H1 (cell line): ENCODE measurements at regions of chr4 and their contacts with region 1.

Region 1: DNA sequence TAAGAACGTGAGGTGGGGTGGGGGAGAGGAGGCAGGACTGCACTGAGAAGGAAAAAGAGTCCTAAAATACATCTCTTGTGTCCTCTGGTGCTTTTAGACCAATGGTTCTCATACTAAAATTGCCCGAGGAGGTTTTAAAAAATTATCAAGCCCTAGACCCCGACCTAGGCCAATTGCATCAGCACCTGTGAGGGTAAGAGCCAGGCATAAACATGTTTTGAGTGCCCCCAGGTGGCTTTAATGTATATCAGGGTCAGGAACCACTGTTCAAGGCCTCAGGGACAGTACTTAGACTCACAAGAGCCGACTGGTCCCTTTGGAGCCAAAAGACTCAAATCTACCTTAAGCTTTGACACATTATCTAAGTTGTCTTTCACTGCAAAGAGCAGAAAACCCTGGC is 37.5 kb upstream of the TMEM150C start:
- DNase-seq: peak in 1 of 2 experiments; percentile 31
- H3K4me3 ChIP-seq: no peak overlapping the region
- H3K27ac ChIP-seq: no peak overlapping the region
- H3K4me1 ChIP-seq: peaks cover 0 to 4% (median 0%) of the 10 kb centered on the region in 4 experiments; a peak in 1 of 7 replicates
- H3K27me3 ChIP-seq: no peaks in the 10 kb centered on the region
- CTCF ChIP-seq: peak; percentile 18 to 79 (median 67)
- EP300 ChIP-seq: no peak
- POLR2A ChIP-seq: no peak
- RAD21 ChIP-seq: peak; percentile 83 to 90

Region 2: GRCh38 chr4:82462415-82462831 is 136.9 kb before region 1 on chr4:
- CTCF ChIA-PET with region 1: interaction called, 39 read pairs
- POLR2A ChIA-PET with region 1: interaction called, 3 read pairs
- DNase-seq: peak; percentile 64 to 95
- H3K4me3 ChIP-seq: no peak overlapping the region
- H3K27ac ChIP-seq: no peak overlapping the region
- H3K4me1 ChIP-seq: no peaks in the 10 kb centered on the region
- H3K27me3 ChIP-seq: no peaks in the 10 kb centered on the region
- CTCF ChIP-seq: peak; percentile 74 to 88 (median 78)
- EP300 ChIP-seq: no peak
- POLR2A ChIP-seq: no peak
- RAD21 ChIP-seq: peak; percentile 81 to 83

Region 3: GRCh38 chr4:82555276-82555675 is 44.1 kb before region 1 on chr4:
- CTCF ChIA-PET with region 1: interaction called, 15 read pairs
- POLR2A ChIA-PET with region 1: no interaction called
- DNase-seq: no peak
- H3K4me3 ChIP-seq: no peak overlapping the region
- H3K27ac ChIP-seq: no peak overlapping the region
- H3K4me1 ChIP-seq: no peaks in the 10 kb centered on the region
- H3K27me3 ChIP-seq: no peaks in the 10 kb centered on the region; a peak in 1 of 7 replicates
- CTCF ChIP-seq: peak; percentile 6 to 60 (median 43)
- EP300 ChIP-seq: no peak
- POLR2A ChIP-seq: no peak
- RAD21 ChIP-seq: peak; percentile 51 to 55

Region 4: GRCh38 chr4:82578935-82579334 is 20.4 kb before region 1 on chr4:
- CTCF ChIA-PET with region 1: interaction called, 10 read pairs
- POLR2A ChIA-PET with region 1: no interaction called
- DNase-seq: no peak
- H3K4me3 ChIP-seq: no peak overlapping the region
- H3K27ac ChIP-seq: no peak overlapping the region
- H3K4me1 ChIP-seq: peaks cover 0 to under 1% (median 0%) of the 10 kb centered on the region in 4 experiments; a peak in 2 of 7 replicates
- H3K27me3 ChIP-seq: no peaks in the 10 kb centered on the region
- CTCF ChIP-seq: peak; percentile 39 to 49 (median 44)
- EP300 ChIP-seq: no peak
- POLR2A ChIP-seq: no peak
- RAD21 ChIP-seq: peak in 1 of 2 experiments; percentile 34; a peak in 2 of 4 replicates

Region 5: DNA sequence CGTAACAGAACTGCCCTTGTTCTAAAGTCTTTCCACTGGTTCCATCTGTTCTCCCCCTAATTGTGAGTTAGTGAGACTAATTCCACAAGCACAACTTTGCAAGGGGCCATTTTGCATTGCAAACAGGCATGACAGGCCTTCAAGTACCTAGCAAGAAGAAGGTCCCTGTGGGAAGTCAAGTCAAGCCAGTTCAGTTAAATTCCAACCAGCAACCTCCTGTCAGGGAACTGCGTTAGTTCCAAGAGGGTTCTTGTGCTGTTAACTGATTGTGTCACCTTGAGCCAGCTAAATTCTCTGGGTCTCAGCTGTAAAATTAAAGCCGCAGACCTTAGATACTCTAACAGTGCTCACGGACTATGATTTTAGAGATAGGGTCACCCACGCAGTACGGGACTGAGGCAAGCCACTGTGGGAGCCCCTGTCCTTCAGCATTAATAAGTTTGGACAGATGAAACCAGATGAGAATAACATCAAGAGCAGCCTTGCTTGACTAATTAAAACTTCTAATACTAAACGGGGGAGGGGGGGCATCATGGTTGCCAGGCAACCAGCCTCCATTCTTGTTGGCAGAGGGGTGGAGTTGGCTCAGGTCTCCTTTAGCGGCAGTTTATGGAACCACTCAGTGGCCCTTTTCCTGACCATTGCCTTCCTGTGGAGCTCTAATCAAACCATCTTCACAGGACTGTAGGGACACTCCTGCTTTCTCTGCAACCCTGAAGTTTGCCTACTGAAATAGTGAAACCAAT is 13.5 kb before region 1 on chr4:
- CTCF ChIA-PET with region 1: interaction called, 20 read pairs
- POLR2A ChIA-PET with region 1: interaction called, 3 read pairs
- DNase-seq: no peak
- H3K4me3 ChIP-seq: no peak overlapping the region
- H3K27ac ChIP-seq: no peak overlapping the region
- H3K4me1 ChIP-seq: peaks cover 4 to 28% (median 19%) of the 10 kb centered on the region in 4 experiments
- H3K27me3 ChIP-seq: no peaks in the 10 kb centered on the region
- CTCF ChIP-seq: no peak
- EP300 ChIP-seq: no peak
- POLR2A ChIP-seq: no peak
- RAD21 ChIP-seq: no peak

Region 6: DNA sequence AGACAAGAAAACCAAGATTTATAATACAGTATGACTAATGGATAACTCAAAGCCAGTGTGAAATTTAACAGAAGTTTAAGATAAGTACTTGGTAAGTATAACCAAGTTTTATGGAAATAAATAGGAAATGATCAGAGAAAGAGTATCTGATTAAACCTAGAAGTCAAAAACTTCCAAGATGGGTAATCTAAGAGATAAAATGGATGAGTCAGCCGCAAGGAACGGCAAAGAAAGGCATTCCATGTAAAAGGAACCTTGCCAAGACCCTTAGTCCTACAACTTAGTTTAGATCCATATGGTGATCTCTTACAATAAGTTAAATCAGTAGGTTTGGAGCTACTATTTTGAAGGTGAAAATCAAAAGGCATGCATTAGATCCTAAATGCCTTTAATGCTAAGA is 376.5 kb after region 1 on chr4:
- CTCF ChIA-PET with region 1: no interaction called
- POLR2A ChIA-PET with region 1: no interaction called
- DNase-seq: no peak
- H3K4me3 ChIP-seq: no peak overlapping the region
- H3K27ac ChIP-seq: no peak overlapping the region
- H3K4me1 ChIP-seq: no peaks in the 10 kb centered on the region
- H3K27me3 ChIP-seq: no peaks in the 10 kb centered on the region
- CTCF ChIP-seq: no peak
- EP300 ChIP-seq: no peak
- POLR2A ChIP-seq: no peak
- RAD21 ChIP-seq: no peak